HCT116 (cell line): ENCODE measurements at regions of chr11 and their contacts with region 1.

Region 1: DNA sequence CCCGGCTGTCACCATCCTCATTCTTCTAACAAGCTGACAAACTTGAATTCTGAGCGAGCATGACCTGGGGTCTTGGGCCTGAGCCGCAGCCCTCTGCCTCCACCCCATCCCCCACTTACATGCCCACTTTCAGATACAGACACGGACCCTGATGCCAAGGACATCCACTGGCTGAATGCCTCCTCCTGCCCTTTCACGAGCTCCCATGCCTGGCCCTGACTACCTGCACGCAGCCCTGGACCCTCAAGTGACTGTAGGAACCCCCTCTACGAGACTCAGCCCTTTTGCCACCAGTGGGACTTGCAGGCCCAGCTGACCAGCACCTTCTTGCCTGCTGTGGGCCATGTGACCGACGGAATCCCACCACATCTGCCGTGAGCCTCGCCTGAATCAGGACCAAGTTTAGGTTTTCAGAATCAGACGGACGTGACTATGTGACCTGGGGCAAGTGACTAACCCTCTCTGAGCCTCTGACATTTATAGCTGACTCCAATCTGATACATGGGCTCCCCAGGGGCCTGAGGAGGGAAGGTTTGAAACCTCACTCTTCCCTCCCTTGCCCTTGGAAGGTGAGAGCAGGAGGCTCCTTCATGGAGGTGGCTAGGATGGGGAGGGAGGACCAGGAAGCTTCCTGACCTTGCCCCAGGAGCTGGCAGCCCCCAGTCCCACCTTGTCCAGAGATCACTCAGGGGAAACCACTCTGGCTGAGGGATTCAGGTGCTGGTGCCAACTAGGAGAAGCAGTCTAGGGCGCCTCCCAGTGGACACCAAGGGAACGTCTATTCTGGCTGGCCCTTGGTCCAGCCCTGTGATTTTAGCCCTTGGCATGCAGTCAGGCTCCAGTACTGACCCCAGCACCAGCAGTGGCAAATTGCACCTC is 46.9 kb upstream of the SYT7 start:
- DNase-seq: peak; percentile 45
- ATAC-seq: peak; percentile 88
- H3K4me3 ChIP-seq: no peak overlapping the region
- H3K27ac ChIP-seq: peak overlapping the region; percentile 68
- H3K4me1 ChIP-seq: peaks cover 33 to 53% of the 10 kb centered on the region in 2 experiments
- H3K27me3 ChIP-seq: no peaks in the 10 kb centered on the region
- CTCF ChIP-seq: peak; percentile 92 to 96 (median 95)
- POLR2A ChIP-seq: no peak
- RAD21 ChIP-seq: peak; percentile 99

Region 2: DNA sequence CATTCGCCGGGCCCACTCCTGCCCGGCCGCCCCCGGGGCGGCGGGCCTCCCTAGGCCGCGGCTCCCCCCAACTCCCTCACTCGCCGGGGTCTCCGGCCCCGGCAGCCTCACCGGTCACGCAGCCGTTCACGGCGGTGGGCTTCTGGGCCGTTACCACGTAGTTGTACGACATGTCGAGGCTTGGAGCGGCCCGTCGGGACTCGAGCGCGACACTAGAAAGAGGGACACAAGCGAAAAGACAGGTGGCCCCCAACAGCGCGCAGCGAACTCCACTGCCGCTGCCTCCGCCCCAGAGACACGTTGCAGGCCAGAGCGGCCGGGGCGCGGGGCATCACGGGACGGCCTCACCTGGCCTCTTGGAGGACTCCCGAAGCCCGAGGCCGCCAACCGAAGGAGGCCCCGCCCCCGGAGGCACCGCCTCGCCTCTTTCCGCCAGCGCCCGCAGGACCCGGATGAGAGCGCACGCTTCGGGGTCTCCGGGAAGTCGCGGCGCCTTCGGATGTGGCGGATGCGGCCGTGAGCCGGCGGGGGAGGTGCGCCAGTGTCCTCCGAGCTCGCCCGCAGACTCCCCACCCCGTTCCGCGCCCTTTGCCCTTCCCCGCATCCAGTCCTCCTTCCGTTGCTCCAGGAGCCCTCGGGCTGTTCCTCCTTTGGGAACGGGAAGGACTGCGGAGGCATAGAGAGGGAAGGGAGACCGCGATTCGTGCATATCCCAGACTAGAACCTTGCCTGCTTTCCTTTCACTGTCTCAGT is 294.8 kb before region 1 on chr11 and contains the starts of genes DDB1 and TKFC:
- CTCF ChIA-PET with region 1: interaction called, 4 read pairs
- POLR2A ChIA-PET with region 1: no interaction called
- RAD21 ChIA-PET with region 1: no interaction called
- intact Hi-C with region 1: loop called (anchors 5 kb)
- DNase-seq: peak; percentile 83
- ATAC-seq: peak; percentile 88
- H3K4me3 ChIP-seq: peak within 1 kb of the TSS; percentile 85 to 97
- H3K27ac ChIP-seq: peak within 1 kb of the TSS; percentile 92
- H3K4me1 ChIP-seq: peaks cover 28 to 46% of the 10 kb centered on the region in 2 experiments
- H3K27me3 ChIP-seq: no peaks in the 10 kb centered on the region
- CTCF ChIP-seq: no peak
- POLR2A ChIP-seq: peak; percentile 75
- RAD21 ChIP-seq: no peak
- total RNA-seq, gene DDB1: 269 TPM
- total RNA-seq, gene TKFC: 156 TPM

Region 3: DNA sequence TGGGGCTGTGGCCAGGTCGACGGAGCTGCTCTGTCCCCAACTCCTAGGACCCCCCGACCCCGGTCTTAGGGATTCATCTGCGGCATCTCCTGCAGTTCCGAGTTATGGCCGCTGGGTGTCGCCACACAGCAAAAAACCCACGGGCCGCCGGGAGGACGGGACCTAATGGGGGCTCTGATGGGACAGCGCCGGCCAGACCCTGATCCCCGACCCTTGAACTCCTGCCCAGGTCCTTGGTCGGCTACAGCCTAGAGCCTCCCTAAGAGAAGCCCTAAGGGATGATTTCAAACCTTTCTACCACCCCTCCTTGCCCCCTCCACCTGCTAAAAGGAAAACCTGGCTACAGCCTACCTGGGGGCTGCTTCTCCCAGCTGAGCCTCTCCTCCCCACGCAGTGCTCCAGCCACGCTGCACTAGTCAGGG is 150.1 kb before region 1 on chr11:
- CTCF ChIA-PET with region 1: interaction called, 3 read pairs
- POLR2A ChIA-PET with region 1: no interaction called
- RAD21 ChIA-PET with region 1: no interaction called
- intact Hi-C with region 1: loop called (anchors 1 kb)
- DNase-seq: no peak
- ATAC-seq: peak; percentile 54
- H3K4me3 ChIP-seq: no peak overlapping the region
- H3K27ac ChIP-seq: no peak overlapping the region
- H3K4me1 ChIP-seq: 0 out of 4 replicates have a peak, but pooled peaks cover 0 to 3% of the 10 kb centered on the region in 2 experiments
- H3K27me3 ChIP-seq: no peaks in the 10 kb centered on the region
- CTCF ChIP-seq: peak; percentile 87 to 93 (median 90)
- POLR2A ChIP-seq: no peak
- RAD21 ChIP-seq: peak; percentile 94

Region 4: DNA sequence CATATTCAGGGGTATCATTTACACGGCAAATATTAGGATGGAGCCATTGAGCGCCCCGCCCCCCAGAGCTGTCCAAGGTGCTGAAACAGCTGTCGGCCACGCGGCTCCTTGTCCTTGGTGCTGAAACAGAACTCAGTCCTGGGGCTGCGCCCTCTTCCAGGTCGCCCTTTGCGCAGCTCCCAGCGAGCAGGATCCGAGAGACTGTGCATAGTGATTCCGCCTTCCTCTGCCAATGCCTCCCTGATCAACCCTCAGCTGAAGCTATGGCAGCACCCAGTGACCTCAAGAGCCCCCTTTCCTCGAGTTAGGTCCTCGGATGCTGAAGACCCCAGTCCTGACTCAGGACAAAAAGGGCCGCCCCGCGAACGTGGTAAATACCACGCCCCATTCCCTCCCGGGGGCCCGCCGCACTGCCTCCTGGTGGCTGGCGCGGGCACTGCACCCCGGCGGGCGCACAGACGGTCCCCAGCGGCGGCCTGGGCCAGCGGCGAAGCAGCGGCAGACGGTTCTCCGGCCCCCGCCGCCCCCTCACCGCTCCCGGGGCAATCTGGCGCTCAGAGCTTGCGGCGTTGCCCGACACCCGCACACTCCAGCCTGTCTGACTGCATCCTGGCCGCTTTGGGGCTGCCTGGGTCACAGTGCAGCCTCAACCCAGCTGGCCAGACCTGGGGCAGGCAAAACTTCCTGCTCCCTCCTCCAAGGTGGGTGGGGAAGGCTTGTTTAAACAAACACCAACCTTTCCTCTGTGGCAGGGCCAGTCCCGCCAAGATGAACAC is 60.3 kb before region 1 on chr11:
- CTCF ChIA-PET with region 1: interaction called, 11 read pairs
- POLR2A ChIA-PET with region 1: no interaction called
- RAD21 ChIA-PET with region 1: interaction called in 1 of 2 experiments, 3 read pairs
- intact Hi-C with region 1: no loop called
- DNase-seq: peak; percentile 81
- ATAC-seq: peak; percentile 96
- H3K4me3 ChIP-seq: peak overlapping the region in 1 of 2 experiments; percentile 28; a peak in 1 of 4 replicates
- H3K27ac ChIP-seq: no peak overlapping the region
- H3K4me1 ChIP-seq: peaks cover 5 to 14% of the 10 kb centered on the region in 2 experiments; a peak in 3 of 4 replicates
- H3K27me3 ChIP-seq: no peaks in the 10 kb centered on the region
- CTCF ChIP-seq: peak; percentile 92 to 96 (median 94)
- POLR2A ChIP-seq: no peak
- RAD21 ChIP-seq: no peak; the same call in 1 of the 2 replicates

Region 5: GRCh38 chr11:61587521-61588453 is 40.0 kb before region 1 on chr11:
- CTCF ChIA-PET with region 1: interaction called, 11 read pairs
- POLR2A ChIA-PET with region 1: no interaction called
- RAD21 ChIA-PET with region 1: interaction called in 1 of 2 experiments, 3 read pairs
- intact Hi-C with region 1: no loop called
- DNase-seq: peak; percentile 46
- ATAC-seq: peak; percentile 83
- H3K4me3 ChIP-seq: peak overlapping the region; percentile 57 to 66
- H3K27ac ChIP-seq: peak overlapping the region; percentile 67
- H3K4me1 ChIP-seq: peaks cover 30 to 44% of the 10 kb centered on the region in 2 experiments
- H3K27me3 ChIP-seq: no peaks in the 10 kb centered on the region
- CTCF ChIP-seq: peak in 2 of 3 experiments; percentile 50 to 52; a peak in 4 of 6 replicates
- POLR2A ChIP-seq: peak; percentile 13
- RAD21 ChIP-seq: no peak